Activated CD8-positive, alpha-beta memory T cell treated with anti-CD3 and anti-CD28 coated beads, Interleukin-2, amount 10 ng/mL, durations not matched to agents 7 days and 5 days (primary cell): ENCODE measurements at regions of chr6 and their contacts with region 1.

Region 1: DNA sequence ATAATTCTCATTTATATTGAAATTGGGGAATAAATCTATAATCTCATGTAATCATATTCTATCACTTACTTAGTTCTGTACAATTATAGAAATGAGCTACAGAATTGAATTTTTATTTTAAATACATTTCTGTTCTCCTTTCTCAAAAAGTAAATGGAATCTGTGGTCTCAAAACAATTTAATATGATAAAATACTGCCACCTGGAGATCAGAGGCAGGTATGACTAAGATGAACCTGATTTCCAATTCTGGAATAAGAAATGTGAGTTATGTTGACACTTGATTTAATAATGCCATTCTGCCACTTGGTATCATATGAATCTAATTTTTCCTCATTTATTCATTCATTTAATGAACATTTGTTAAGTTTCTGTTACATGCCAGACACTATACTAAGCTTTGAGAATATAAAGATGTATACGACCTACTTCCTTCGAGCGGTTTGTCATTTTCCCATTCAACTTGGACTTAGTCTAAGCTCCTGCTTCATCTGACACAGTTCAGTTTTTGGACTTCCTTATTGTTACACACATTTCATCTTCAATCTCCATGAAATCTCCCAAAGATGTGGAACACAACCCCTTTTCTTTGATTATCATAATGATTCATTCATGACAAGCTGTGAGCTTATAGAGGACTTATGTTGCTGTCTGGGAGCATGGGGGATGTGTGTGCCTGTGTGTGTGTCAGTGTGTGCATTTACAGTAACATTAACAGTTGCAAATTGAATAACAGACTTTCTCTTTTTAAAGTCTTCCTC is 7.5 kb upstream of the CCDC28A start:
- DNase-seq: no peak
- ATAC-seq: no peak
- H3K4me3 Mint-ChIP-seq: no peak overlapping the region
- H3K27ac Mint-ChIP-seq: no peak overlapping the region
- H3K4me1 Mint-ChIP-seq: peaks cover 4% of the 10 kb centered on the region
- H3K27me3 Mint-ChIP-seq: no peaks in the 10 kb centered on the region

Region 2: DNA sequence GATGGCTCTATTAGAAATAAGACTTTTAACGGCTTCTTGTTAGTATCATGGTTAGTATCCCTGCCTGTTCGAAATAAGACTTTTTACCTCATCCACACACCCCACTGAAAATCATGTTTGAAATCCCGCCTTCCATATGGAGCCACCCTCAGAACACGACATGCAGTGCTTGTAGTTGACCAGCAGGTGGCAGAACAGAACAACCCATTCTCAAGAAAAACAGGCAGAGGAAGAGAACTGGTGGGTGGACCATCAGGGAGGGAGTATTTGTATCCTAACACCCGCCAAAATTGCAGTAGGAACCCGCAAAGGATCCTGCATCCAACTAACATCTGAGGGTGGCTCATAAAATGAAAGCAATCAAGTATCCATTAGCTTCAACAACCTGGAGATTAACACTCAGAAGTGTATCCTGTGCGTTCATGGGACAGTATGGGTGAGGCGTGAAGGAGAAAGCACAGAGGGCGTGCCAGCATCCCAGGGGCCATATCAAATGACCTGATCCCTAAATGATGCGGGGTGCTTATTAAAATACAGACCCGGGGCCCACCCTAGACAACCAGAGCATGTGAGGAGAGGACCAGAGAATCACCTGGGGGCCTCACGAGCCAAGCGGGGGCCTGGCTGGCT is 177.2 kb before region 1 on chr6:
- CTCF ChIA-PET with region 1: interaction called, 49 read pairs
- DNase-seq: peak; percentile 60
- ATAC-seq: peak; percentile 25
- H3K4me3 Mint-ChIP-seq: no peak overlapping the region
- H3K27ac Mint-ChIP-seq: no peak overlapping the region
- H3K4me1 Mint-ChIP-seq: peaks cover 33% of the 10 kb centered on the region
- H3K27me3 Mint-ChIP-seq: peaks cover 5% of the 10 kb centered on the region

Region 3: DNA sequence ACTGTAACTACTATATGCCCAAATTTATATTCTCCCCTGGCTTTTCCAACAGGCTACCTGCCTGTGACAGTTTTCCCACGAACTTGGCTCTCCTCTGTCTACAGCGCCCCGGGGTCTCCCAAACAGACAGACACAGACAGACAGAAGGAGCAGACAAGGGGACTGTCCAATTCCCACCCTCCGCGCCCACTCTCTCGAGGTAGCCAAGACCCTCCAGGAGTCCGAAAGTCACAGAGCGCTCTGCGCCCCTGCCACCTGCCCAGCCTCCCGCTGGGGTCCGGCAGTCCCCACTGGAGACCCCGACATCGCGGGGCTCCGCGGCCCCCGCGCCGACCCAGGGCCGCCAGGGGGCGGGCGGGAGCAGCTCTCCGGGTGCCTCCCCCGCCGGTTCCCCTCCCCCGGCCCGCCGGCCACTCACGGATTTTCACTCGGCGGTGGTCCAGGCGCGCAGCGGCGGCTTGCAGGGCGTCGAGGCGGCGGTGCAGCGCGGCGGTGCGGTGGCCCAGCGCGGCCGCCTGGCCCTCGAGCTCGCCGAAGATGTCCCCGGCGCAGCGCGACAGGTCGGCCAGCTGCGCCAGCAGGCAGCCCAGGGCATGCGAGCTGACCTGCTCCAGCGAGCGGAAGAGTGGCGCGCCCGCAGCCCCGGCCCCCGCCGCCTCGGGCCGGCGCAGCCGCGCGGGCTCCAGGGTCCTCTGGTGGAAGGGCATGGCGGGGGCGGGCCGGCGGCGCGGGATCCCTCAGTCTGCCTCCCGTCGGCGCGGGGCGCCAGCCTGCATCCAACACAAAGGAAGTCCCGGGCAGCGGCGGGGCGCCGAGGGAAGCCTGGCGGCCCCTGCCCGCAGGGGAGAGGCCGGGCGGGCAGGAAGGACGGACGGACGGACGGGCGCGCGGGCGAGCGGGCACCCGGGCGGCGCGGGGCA is 73.8 kb before region 1 on chr6:
- CTCF ChIA-PET with region 1: interaction called, 20 read pairs
- DNase-seq: peak; percentile 60
- ATAC-seq: peak; percentile 67
- H3K4me3 Mint-ChIP-seq: peak overlapping the region; percentile 70
- H3K27ac Mint-ChIP-seq: no peak overlapping the region
- H3K4me1 Mint-ChIP-seq: peaks cover 6% of the 10 kb centered on the region
- H3K27me3 Mint-ChIP-seq: peaks cover 64% of the 10 kb centered on the region